ENCODE measurements at regions of chr12 and their contacts with region 1.

Region 1: DNA sequence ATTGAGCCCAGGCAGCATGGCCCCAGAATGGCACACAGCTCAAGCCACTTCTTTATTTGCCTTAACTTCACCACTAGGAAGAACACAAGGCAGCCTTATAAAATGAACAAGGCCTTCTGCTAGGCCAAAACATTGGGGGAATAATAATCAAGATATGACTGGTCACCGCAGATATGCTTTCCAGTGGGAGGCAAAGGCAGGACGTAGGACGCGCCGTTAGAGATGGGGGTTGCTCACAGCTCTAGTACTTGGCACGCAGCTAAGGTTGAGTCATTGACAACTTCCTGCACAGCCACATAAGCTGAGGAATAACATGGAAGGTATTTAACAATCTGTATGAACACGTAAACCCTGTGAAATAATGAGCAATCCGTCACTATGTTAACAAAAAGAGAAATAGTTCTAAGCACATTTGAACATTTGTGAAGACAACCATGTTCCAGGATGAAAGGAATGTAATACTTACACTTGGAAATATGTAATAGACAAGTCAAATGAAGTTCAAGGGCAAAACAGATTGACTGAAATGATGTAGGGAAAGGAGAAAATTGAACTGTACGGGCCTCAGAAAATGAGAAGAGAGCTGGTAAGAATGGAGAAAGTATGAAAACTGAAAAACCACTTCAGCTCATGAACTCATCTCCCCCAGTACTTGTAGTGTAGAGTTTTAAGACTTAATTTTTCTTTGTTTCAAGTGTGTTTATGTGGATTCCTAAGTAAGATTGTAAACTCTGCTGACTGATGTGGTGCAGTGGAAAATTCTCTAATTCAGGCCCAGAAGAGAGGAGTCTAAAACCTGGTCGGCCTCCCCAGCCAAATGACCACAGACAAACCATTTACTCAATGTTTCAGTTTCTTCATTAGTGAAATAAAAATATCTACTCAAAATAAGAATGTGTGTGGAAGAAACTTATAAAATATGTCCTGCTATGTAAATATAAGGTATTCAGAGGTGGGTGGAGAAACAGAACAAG is 59.3 kb upstream of the CCDC91 start:
- DNase-seq: peak; percentile 82 to 83
- ATAC-seq: peak; percentile 75
- H3K4me3 ChIP-seq: no peak overlapping the region
- H3K27ac ChIP-seq: peak overlapping the region; percentile 86 to 93
- H3K4me1 ChIP-seq: peaks cover 4% of the 10 kb centered on the region in 2 donors
- H3K27me3 ChIP-seq: no peaks in the 10 kb centered on the region

Region 2: DNA sequence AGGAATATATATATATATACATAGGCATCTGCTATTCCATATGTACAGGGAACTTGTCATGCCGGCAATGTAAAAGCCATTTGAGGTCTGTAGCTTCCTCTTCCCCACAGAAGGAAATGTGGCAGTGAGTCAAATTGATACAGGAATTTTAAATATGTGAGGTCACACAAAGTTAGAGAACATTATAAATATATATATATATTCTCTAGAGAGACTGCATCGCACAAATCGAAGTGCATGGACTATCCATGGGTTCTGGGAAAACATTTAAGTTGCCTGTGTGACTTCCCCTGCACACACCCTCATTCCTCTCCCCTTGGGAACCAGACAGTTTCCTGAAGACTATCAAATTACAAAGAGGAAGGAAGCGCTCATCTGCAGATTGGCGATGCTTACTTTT is 41.6 kb before region 1 on chr12:
- intact Hi-C with region 1: loop called in 1 of 2 experiments (anchors 5 kb)
- DNase-seq: no peak
- ATAC-seq: no peak
- H3K4me3 ChIP-seq: no peak overlapping the region
- H3K27ac ChIP-seq: no peak overlapping the region
- H3K4me1 ChIP-seq: peaks cover 2 to 5% of the 10 kb centered on the region in 2 donors
- H3K27me3 ChIP-seq: no peaks in the 10 kb centered on the region